ENCODE measurements at regions of chr2 and their contacts with region 1.

Region 1: DNA sequence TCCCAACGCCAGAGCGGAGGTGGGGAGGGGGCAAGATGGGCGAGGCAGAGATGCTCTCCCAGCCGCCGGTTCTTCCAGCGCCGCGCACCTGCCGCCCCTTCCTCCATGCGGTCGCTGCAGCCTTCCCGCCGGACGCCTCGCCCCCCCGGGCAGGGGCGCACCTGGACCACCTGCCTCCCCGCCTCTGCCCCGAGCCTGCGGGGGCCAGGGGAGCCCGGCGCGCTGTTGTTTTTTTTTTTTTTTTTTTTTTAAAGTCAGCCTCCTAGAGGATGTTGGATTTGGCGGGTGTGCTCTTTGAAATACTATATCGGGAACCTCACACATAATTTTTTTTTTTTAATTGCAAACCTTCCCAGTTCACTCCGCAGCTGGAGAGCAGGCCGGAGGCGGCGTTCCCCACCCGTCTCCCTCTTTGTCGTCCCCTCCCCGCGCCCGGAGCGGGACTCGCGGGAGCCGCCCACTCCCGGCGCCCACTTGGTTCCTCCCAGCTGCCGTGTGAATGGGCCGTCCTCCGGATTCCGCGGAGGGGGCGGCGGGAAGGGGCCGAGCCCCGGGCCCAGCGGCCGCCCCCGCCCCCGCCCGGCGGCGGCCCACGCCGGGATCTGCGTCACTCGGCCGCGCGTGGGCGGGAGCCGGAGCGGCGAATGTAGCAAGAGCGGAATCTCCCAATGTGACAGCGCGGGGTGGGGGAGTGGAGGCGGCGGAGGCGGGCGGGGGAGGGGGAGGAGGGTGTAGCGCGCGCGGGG is 421 bp upstream of the NAB1 start:
- DNase-seq: peak; percentile 87 to 95 (median 94)
- H3K4me3 ChIP-seq: peak overlapping the region; percentile 61 to 86 (median 61)
- H3K4me3 Mint-ChIP-seq: peak overlapping the region; percentile 84 to 88
- H3K27ac ChIP-seq: peak overlapping the region; percentile 70 to 84
- H3K27ac Mint-ChIP-seq: peak overlapping the region; percentile 28 to 95 (median 87)
- H3K4me1 ChIP-seq: peaks cover 18 to 29% of the 10 kb centered on the region in 2 donors
- H3K4me1 Mint-ChIP-seq: peaks cover 24% of the 10 kb centered on the region
- H3K27me3 ChIP-seq: no peaks in the 10 kb centered on the region
- H3K27me3 Mint-ChIP-seq: peaks cover 0 to 3% (median 0%) of the 10 kb centered on the region in 3 donors
- CTCF ChIP-seq: no peak

Region 2: DNA sequence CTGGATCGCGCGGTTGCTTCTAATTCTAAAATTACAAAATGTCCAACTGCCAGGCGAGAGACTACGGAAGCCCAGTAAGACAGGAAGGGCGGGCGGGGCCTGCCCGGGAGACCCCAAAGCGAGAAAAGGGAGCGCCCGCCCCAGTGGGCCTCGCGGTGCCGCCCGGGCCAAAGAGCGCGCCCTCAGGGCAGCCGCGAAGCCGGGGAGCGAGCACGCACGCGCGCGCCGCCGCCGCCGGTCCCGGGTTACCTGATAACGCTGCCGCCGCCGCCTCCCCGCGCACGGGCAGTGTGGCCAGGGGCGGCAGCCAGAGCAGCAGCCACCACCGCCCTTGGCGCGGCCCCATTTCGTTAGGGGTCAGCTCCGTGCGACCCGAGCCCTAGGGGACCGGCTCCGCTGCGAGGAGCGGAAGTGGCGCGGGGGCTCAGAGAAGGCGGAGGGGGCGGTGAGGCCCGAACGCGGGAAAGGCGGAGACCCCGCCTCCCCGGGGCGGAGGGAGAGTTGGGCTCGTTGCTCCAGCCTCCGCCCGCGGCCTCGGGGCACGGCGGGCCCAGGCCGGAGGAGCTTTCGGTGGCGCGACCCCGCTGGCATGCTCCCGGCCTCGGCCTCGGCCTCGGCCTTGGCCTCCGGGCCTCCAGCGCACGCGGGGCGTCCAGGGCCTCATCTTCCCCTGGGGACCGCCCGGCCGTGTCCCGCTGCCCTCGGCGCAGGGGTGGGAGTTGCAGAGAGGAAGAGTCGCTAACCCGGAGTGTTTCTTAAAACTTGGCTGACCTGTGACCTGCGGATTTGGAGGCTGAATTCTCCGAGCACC is 113.9 kb before region 1 on chr2 and contains the start of gene NEMP2:
- intact Hi-C with region 1: loop called (anchors 5 to 10 kb)
- DNase-seq: peak; percentile 27 to 58 (median 53)
- H3K4me3 ChIP-seq: peak within 1 kb of the TSS; percentile 72 to 98 (median 87)
- H3K4me3 Mint-ChIP-seq: peak within 1 kb of the TSS; percentile 94 to 95
- H3K27ac ChIP-seq: peak within 1 kb of the TSS; percentile 59 to 95
- H3K27ac Mint-ChIP-seq: peak within 1 kb of the TSS; percentile 91 to 97 (median 96)
- H3K4me1 ChIP-seq: peaks cover 22 to 35% of the 10 kb centered on the region in 2 donors
- H3K4me1 Mint-ChIP-seq: peaks cover 35% of the 10 kb centered on the region
- H3K27me3 ChIP-seq: no peaks in the 10 kb centered on the region
- H3K27me3 Mint-ChIP-seq: no peaks in the 10 kb centered on the region
- CTCF ChIP-seq: no peak
- polyA plus RNA-seq, gene NEMP2: 0.44 to 2.5 (median 1.5) TPM

Region 3: GRCh38 chr2:190607657-190608357 is 40.7 kb before region 1 on chr2:
- intact Hi-C with region 1: no loop called
- DNase-seq: no peak
- H3K4me3 ChIP-seq: no peak overlapping the region
- H3K4me3 Mint-ChIP-seq: no peak overlapping the region
- H3K27ac ChIP-seq: no peak overlapping the region
- H3K27ac Mint-ChIP-seq: no peak overlapping the region
- H3K4me1 ChIP-seq: no peaks in the 10 kb centered on the region
- H3K4me1 Mint-ChIP-seq: peaks cover 13% of the 10 kb centered on the region
- H3K27me3 ChIP-seq: no peaks in the 10 kb centered on the region
- H3K27me3 Mint-ChIP-seq: no peaks in the 10 kb centered on the region
- CTCF ChIP-seq: no peak